HAP-1 (cell line): ENCODE measurements at regions of chr10 and their contacts with region 1.

Region 1: GRCh38 chr10:24642622-24643417 is 80.9 kb downstream of the ARHGAP21 start:
- DNase-seq: peak; percentile 24 to 75
- H3K4me3 ChIP-seq: no peak overlapping the region
- H3K4me1 ChIP-seq: peaks cover 9% of the 10 kb centered on the region
- H3K27me3 ChIP-seq: no peaks in the 10 kb centered on the region

Region 2: GRCh38 chr10:24528946-24529345 is 113.9 kb before region 1 on chr10:
- in situ Hi-C with region 1: no loop called
- DNase-seq: no peak
- H3K4me3 ChIP-seq: no peak overlapping the region
- H3K4me1 ChIP-seq: no peaks in the 10 kb centered on the region
- H3K27me3 ChIP-seq: no peaks in the 10 kb centered on the region

Region 3: GRCh38 chr10:25080880-25081581 is 438.2 kb after region 1 on chr10:
- in situ Hi-C with region 1: loop called (anchors 10 kb)
- DNase-seq: peak; percentile 93 to 94
- H3K4me3 ChIP-seq: no peak overlapping the region
- H3K4me1 ChIP-seq: peaks cover 40% of the 10 kb centered on the region
- H3K27me3 ChIP-seq: no peaks in the 10 kb centered on the region